ENCODE measurements at regions of chr16 and their contacts with region 1.

Region 1: GRCh38 chr16:72066747-72067146 is 3.7 kb downstream of the HPR start:
- DNase-seq: no peak
- H3K4me3 Mint-ChIP-seq: no peak overlapping the region
- H3K27ac Mint-ChIP-seq: no peak overlapping the region
- H3K4me1 Mint-ChIP-seq: no peaks in the 10 kb centered on the region
- H3K27me3 Mint-ChIP-seq: no peaks in the 10 kb centered on the region

Region 2: GRCh38 chr16:72099377-72099818 is 32.7 kb after region 1 on chr16:
- intact Hi-C with region 1: loop called (anchors 1 kb)
- DNase-seq: peak; percentile 43
- H3K4me3 Mint-ChIP-seq: no peak overlapping the region
- H3K27ac Mint-ChIP-seq: no peak overlapping the region
- H3K4me1 Mint-ChIP-seq: peaks cover 15% of the 10 kb centered on the region
- H3K27me3 Mint-ChIP-seq: no peaks in the 10 kb centered on the region